Activated CD4-positive, alpha-beta T cell treated with anti-CD3 and anti-CD28 coated beads for 36 hours (primary cell): ENCODE measurements at regions of chr1 and their contacts with region 1.

Region 1: GRCh38 chr1:84573967-84574842 is at the start of gene CTBS:
- DNase-seq: peak; percentile 94
- ATAC-seq: peak; percentile 85
- H3K4me3 Mint-ChIP-seq: peak within 1 kb of the TSS; percentile 97
- H3K27ac Mint-ChIP-seq: peak within 1 kb of the TSS; percentile 99
- H3K4me1 Mint-ChIP-seq: peaks cover 45% of the 10 kb centered on the region
- H3K27me3 Mint-ChIP-seq: no peaks in the 10 kb centered on the region
- total RNA-seq, gene CTBS: 13.5 to 17.3 TPM

Region 2: DNA sequence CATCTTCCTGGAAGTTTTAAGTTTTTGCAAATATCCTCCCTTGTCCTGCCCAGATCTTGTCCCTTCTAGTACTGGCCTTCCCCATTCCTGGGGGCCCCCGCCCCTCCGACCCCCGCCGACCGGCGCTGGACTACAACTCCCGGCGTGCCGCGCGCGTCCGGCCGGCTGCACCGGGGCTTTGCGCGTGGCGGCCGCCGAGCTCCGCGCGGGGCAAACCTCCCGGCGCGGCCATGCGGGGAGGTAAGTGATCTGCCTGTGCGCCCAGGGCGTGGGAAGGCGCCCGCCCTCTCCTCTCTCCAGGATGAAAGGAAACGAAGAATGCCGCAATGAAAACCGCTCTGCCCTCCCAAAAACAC is 275.9 kb before region 1 on chr1:
- CTCF ChIA-PET with region 1: no interaction called
- POLR2A ChIA-PET with region 1: no interaction called
- intact Hi-C with region 1: loop called in 1 of 2 experiments (anchors 5 kb)
- DNase-seq: peak; percentile 71
- ATAC-seq: peak; percentile 79
- H3K4me3 Mint-ChIP-seq: peak overlapping the region; percentile 78
- H3K27ac Mint-ChIP-seq: peak overlapping the region; percentile 71
- H3K4me1 Mint-ChIP-seq: peaks cover 34% of the 10 kb centered on the region
- H3K27me3 Mint-ChIP-seq: peaks cover 6% of the 10 kb centered on the region

Region 3: DNA sequence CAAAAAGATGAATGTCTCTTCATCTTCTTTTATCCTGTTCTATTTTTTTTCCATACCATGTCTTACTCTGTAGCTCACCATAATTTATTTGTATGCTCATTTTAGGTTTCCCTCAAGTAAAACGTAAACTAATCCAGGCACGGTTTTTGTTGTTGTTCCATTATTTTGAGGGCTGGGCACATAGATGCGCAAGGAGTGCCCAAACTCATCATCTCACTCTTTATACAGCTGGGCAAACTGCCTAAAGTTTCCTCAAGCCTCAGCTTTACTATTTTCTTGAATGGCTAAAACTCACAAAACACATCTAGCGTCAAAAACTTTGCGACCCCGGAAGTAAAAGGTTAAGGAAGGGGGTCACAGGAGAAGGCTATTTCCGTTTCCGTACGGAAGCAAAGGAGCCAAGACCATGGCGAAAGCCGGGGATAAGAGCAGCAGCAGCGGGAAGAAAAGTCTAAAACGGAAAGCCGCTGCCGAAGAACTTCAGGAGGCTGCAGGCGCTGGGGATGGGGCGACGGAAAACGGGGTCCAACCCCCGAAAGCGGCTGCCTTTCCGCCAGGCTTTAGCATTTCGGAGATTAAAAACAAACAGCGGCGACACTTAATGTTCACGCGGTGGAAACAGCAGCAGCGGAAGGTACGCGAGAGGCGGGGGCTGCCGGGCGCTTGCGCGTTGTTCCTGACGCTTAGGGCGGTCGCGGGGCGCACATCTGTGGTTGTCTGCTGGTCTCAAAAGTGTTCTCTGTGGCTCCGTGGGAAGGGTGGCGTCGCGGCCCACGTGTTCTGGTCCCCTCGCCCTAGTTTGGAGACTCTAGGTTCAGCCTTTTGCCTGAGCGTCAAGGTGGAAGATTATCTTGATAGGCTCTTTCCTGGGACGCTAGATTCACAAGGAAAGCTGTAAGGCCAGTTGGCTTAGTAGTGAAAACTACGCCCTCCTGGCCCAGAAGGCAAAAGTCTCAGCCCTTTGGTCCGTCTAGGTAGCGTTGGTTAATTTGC is 95.0 kb before region 1 on chr1 and contains the start of gene RPF1:
- CTCF ChIA-PET with region 1: interaction called, 6 read pairs
- POLR2A ChIA-PET with region 1: no interaction called
- intact Hi-C with region 1: loop called (anchors 1 kb)
- DNase-seq: peak; percentile 86
- ATAC-seq: peak; percentile 92
- H3K4me3 Mint-ChIP-seq: peak within 1 kb of the TSS; percentile 92
- H3K27ac Mint-ChIP-seq: peak within 1 kb of the TSS; percentile 98
- H3K4me1 Mint-ChIP-seq: peaks cover 40% of the 10 kb centered on the region
- H3K27me3 Mint-ChIP-seq: peaks cover 17% of the 10 kb centered on the region
- total RNA-seq, gene RPF1: 59.1 to 70.2 TPM

Region 4: GRCh38 chr1:84598846-84599741 is 24.9 kb after region 1 on chr1:
- CTCF ChIA-PET with region 1: interaction called, 7 read pairs
- POLR2A ChIA-PET with region 1: interaction called, 3 read pairs
- intact Hi-C with region 1: loop called (anchors 1 kb)
- DNase-seq: no peak
- ATAC-seq: peak; percentile 88
- H3K4me3 Mint-ChIP-seq: peak overlapping the region; percentile 30
- H3K27ac Mint-ChIP-seq: peak overlapping the region; percentile 86
- H3K4me1 Mint-ChIP-seq: peaks cover 32% of the 10 kb centered on the region
- H3K27me3 Mint-ChIP-seq: no peaks in the 10 kb centered on the region

Region 5: GRCh38 chr1:85200870-85201339 is 626.7 kb after region 1 on chr1 and contains the start of gene SYDE2:
- CTCF ChIA-PET with region 1: no interaction called
- POLR2A ChIA-PET with region 1: no interaction called
- intact Hi-C with region 1: loop called in 1 of 2 experiments (anchors 5 kb)
- DNase-seq: peak; percentile 79
- ATAC-seq: peak; percentile 76
- H3K4me3 Mint-ChIP-seq: peak within 1 kb of the TSS; percentile 90
- H3K27ac Mint-ChIP-seq: peak within 1 kb of the TSS; percentile 88
- H3K4me1 Mint-ChIP-seq: peaks cover 25% of the 10 kb centered on the region
- H3K27me3 Mint-ChIP-seq: peaks cover 12% of the 10 kb centered on the region
- total RNA-seq, gene SYDE2: 2.9 to 3.3 TPM